ENCODE measurements at regions of chr4 and their contacts with region 1.

Region 1: GRCh38 chr4:159175085-159175988 is 72.5 kb downstream of the RAPGEF2 start:
- DNase-seq: peak; percentile 9 to 76 (median 69)
- ATAC-seq: peak; percentile 91
- H3K4me3 ChIP-seq: no peak overlapping the region
- H3K4me3 Mint-ChIP-seq: peak overlapping the region in 3 of 10 donors; percentile 0 to 45 (median 24)
- H3K27ac ChIP-seq: no peak overlapping the region
- H3K27ac Mint-ChIP-seq: peak overlapping the region in 2 of 9 donors; percentile 6 to 76
- H3K4me1 ChIP-seq: peaks cover 0 to 4% of the 10 kb centered on the region in 2 donors
- H3K4me1 Mint-ChIP-seq: peaks cover 13 to 63% (median 31%) of the 10 kb centered on the region in 7 donors
- H3K27me3 ChIP-seq: no peaks in the 10 kb centered on the region
- H3K27me3 Mint-ChIP-seq: peaks cover 0 to 8% (median 0%) of the 10 kb centered on the region in 5 donors

Region 2: GRCh38 chr4:158253350-158253980 is 921.9 kb before region 1 on chr4:
- CTCF ChIA-PET with region 1: no interaction called
- POLR2A ChIA-PET with region 1: no interaction called
- intact Hi-C with region 1: loop called in 1 of 2 experiments (anchors 1 kb)
- DNase-seq: peak in 7 of 9 donors; percentile 2 to 51 (median 26)
- ATAC-seq: peak; percentile 73
- H3K4me3 ChIP-seq: no peak overlapping the region
- H3K4me3 Mint-ChIP-seq: peak overlapping the region in 1 of 10 donors; percentile 19
- H3K27ac ChIP-seq: no peak overlapping the region
- H3K27ac Mint-ChIP-seq: no peak overlapping the region
- H3K4me1 ChIP-seq: no peaks in the 10 kb centered on the region
- H3K4me1 Mint-ChIP-seq: peaks cover 3 to 14% (median 12%) of the 10 kb centered on the region in 7 donors
- H3K27me3 ChIP-seq: peaks cover 0 to 5% of the 10 kb centered on the region in 2 donors
- H3K27me3 Mint-ChIP-seq: peaks cover 0 to 13% (median 9%) of the 10 kb centered on the region in 5 donors

Region 3: GRCh38 chr4:158671915-158672806 is 503.2 kb before region 1 on chr4 and contains the start of gene ETFDH:
- CTCF ChIA-PET with region 1: no interaction called
- POLR2A ChIA-PET with region 1: no interaction called
- intact Hi-C with region 1: loop called in 1 of 2 experiments (anchors 1 kb)
- DNase-seq: peak; percentile 91 to 99 (median 98)
- ATAC-seq: peak; percentile 88
- H3K4me3 ChIP-seq: peak within 1 kb of the TSS; percentile 80
- H3K4me3 Mint-ChIP-seq: peak within 1 kb of the TSS; percentile 88 to 99 (median 96)
- H3K27ac ChIP-seq: peak within 1 kb of the TSS; percentile 93
- H3K27ac Mint-ChIP-seq: peak within 1 kb of the TSS; percentile 91 to 99 (median 97)
- H3K4me1 ChIP-seq: peaks cover 13 to 16% of the 10 kb centered on the region in 2 donors
- H3K4me1 Mint-ChIP-seq: peaks cover 6 to 43% (median 35%) of the 10 kb centered on the region in 7 donors
- H3K27me3 ChIP-seq: no peaks in the 10 kb centered on the region
- H3K27me3 Mint-ChIP-seq: peaks cover 0 to 3% (median 0%) of the 10 kb centered on the region in 5 donors
- total RNA-seq, gene ETFDH: 12.5 to 25.8 (median 17.5) TPM

Region 4: GRCh38 chr4:158729716-158730559 is 445.4 kb before region 1 on chr4:
- CTCF ChIA-PET with region 1: no interaction called
- POLR2A ChIA-PET with region 1: no interaction called
- intact Hi-C with region 1: loop called (anchors 1 kb)
- DNase-seq: peak; percentile 18 to 57 (median 44)
- ATAC-seq: peak; percentile 93
- H3K4me3 ChIP-seq: no peak overlapping the region
- H3K4me3 Mint-ChIP-seq: no peak overlapping the region
- H3K27ac ChIP-seq: no peak overlapping the region
- H3K27ac Mint-ChIP-seq: no peak overlapping the region
- H3K4me1 ChIP-seq: no peaks in the 10 kb centered on the region
- H3K4me1 Mint-ChIP-seq: peaks cover 0 to 23% (median 0%) of the 10 kb centered on the region in 7 donors
- H3K27me3 ChIP-seq: no peaks in the 10 kb centered on the region
- H3K27me3 Mint-ChIP-seq: peaks cover 26 to 42% (median 32%) of the 10 kb centered on the region in 5 donors

Region 5: GRCh38 chr4:158856852-158857251 is 318.5 kb before region 1 on chr4:
- CTCF ChIA-PET with region 1: interaction called, 7 read pairs
- POLR2A ChIA-PET with region 1: no interaction called
- intact Hi-C with region 1: loop called (anchors 1 kb)
- DNase-seq: peak in 3 of 9 donors; percentile 3 to 16 (median 13)
- ATAC-seq: peak; percentile 79
- H3K4me3 ChIP-seq: no peak overlapping the region
- H3K4me3 Mint-ChIP-seq: no peak overlapping the region
- H3K27ac ChIP-seq: no peak overlapping the region
- H3K27ac Mint-ChIP-seq: no peak overlapping the region
- H3K4me1 ChIP-seq: no peaks in the 10 kb centered on the region
- H3K4me1 Mint-ChIP-seq: peaks cover 0 to 10% (median 0%) of the 10 kb centered on the region in 7 donors
- H3K27me3 ChIP-seq: no peaks in the 10 kb centered on the region
- H3K27me3 Mint-ChIP-seq: no peaks in the 10 kb centered on the region

Region 6: GRCh38 chr4:159006202-159006601 is 169.1 kb before region 1 on chr4:
- CTCF ChIA-PET with region 1: no interaction called
- POLR2A ChIA-PET with region 1: no interaction called
- intact Hi-C with region 1: no loop called
- DNase-seq: no peak
- ATAC-seq: no peak
- H3K4me3 ChIP-seq: no peak overlapping the region
- H3K4me3 Mint-ChIP-seq: no peak overlapping the region
- H3K27ac ChIP-seq: no peak overlapping the region
- H3K27ac Mint-ChIP-seq: no peak overlapping the region
- H3K4me1 ChIP-seq: no peaks in the 10 kb centered on the region
- H3K4me1 Mint-ChIP-seq: peaks cover 0 to 7% (median 0%) of the 10 kb centered on the region in 7 donors
- H3K27me3 ChIP-seq: no peaks in the 10 kb centered on the region
- H3K27me3 Mint-ChIP-seq: peaks cover 0 to 22% (median 13%) of the 10 kb centered on the region in 5 donors

Region 7: GRCh38 chr4:159048166-159048886 is 127.0 kb before region 1 on chr4:
- CTCF ChIA-PET with region 1: no interaction called
- POLR2A ChIA-PET with region 1: no interaction called
- intact Hi-C with region 1: loop called in 1 of 2 experiments (anchors 10 kb)
- DNase-seq: no peak
- ATAC-seq: no peak
- H3K4me3 ChIP-seq: no peak overlapping the region
- H3K4me3 Mint-ChIP-seq: no peak overlapping the region
- H3K27ac ChIP-seq: no peak overlapping the region
- H3K27ac Mint-ChIP-seq: no peak overlapping the region
- H3K4me1 ChIP-seq: no peaks in the 10 kb centered on the region
- H3K4me1 Mint-ChIP-seq: peaks cover 0 to 38% (median 0%) of the 10 kb centered on the region in 7 donors
- H3K27me3 ChIP-seq: no peaks in the 10 kb centered on the region
- H3K27me3 Mint-ChIP-seq: peaks cover 2 to 18% (median 5%) of the 10 kb centered on the region in 5 donors